Gastrocnemius medialis (tissue), 4 donors: ENCODE measurements at regions of chr9 and their contacts with region 1.

Region 1: DNA sequence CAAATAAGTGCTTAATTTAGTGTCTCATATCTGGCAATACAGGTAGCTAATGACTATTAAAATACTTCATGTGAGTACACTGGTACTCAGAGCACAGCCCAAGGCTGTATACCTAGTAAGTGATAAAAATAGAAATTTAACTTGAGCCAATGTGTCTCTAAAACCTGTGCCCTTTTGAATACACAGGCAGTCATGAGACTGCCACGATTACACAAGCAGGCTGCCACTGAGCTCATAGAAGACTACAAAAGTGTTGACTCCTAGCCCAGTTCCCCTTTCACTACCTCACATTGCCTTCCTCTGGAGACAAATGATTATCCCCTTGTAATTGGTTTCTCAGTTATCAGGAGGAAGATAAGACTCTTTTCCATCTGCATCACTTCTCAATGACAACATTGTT is 66.3 kb upstream of the PAPPA start:
- DNase-seq: peak; percentile 72 to 86
- ATAC-seq: peak; percentile 99
- H3K4me3 ChIP-seq: no peak overlapping the region
- H3K27ac ChIP-seq: peak overlapping the region; percentile 61 to 73 (median 66)
- H3K4me1 ChIP-seq: peaks cover 20 to 24% of the 10 kb centered on the region in 2 donors
- H3K27me3 ChIP-seq: no peaks in the 10 kb centered on the region
- CTCF ChIP-seq: no peak
- POLR2A ChIP-seq: no peak

Region 2: DNA sequence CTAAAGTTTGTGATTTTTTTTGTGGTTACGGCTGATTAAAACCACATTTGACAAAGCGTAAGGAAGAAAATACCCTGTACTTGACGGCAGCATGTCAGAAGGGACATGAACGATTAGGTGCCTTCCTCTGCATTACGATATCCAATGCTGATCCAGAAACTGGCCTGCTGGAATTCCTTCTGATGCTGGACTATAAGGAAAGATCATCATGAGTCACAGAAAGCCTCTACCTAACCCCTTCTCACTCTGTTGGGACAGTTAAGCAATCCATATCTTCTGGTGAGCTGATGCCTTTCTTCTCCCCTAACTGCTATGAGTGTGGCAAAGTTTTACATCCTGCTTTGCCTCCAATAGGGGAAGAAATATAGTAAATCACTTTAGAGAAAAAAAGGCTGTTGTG is 12.1 kb before region 1 on chr9:
- in situ Hi-C with region 1: no loop called
- intact Hi-C with region 1: no loop called
- DNase-seq: no peak
- ATAC-seq: no peak
- H3K4me3 ChIP-seq: no peak overlapping the region
- H3K27ac ChIP-seq: no peak overlapping the region
- H3K4me1 ChIP-seq: no peaks in the 10 kb centered on the region
- H3K27me3 ChIP-seq: no peaks in the 10 kb centered on the region
- CTCF ChIP-seq: no peak
- POLR2A ChIP-seq: no peak

Region 3: GRCh38 chr9:116156621-116157314 is 69.5 kb after region 1 on chr9:
- in situ Hi-C with region 1: no loop called
- intact Hi-C with region 1: loop called (anchors 2 kb)
- DNase-seq: peak; percentile 57 to 86
- ATAC-seq: peak; percentile 94 to 96
- H3K4me3 ChIP-seq: peak overlapping the region; percentile 27 to 53 (median 35)
- H3K27ac ChIP-seq: peak overlapping the region; percentile 75 to 82 (median 78)
- H3K4me1 ChIP-seq: peaks cover 18 to 37% of the 10 kb centered on the region in 2 donors
- H3K27me3 ChIP-seq: peaks cover 0 to 17% (median 0%) of the 10 kb centered on the region in 3 donors
- CTCF ChIP-seq: peak in 2 of 5 experiments; percentile 7 to 16
- POLR2A ChIP-seq: peak; percentile 36 to 62